ENCODE measurements at regions of chr17 and their contacts with region 1.

Region 1: DNA sequence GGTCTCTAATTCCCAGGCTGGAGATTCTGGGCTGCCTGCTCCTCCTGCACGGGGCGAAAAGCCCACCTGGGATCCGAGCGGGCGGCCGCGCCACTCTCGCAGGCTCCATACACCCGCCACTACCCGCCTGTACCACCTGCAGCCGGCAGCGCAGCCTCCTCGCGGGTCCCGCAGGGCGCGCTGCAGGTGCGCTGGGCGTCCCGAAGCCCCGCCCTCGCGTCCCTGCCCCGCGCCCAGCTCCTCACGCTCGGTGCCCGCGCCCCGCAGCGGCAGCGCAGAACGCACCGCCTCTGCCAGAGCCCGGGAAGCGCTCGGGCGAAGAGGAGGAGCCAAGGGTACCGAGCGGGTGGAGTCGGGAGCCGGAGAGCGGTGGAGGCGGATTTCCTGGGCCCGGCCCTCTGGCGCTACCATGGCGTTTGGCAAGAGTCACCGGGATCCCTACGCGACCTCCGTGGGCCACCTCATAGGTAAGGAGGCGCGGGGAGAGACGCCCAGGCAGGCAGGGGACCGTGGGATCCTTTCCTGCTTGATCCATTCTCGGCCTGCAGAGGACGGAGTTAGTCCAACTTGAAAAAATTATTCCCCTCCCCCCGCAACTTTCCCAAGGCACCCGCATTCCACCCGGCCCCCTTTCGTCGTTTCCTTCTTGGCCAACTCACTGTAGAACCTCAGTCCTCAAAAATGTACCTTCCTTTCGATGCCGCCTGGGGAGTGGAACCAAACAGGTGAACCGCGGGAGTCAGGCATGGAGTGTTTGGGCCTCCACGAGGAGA is at the start of gene TOM1L1:
- DNase-seq: peak; percentile 74 to 83 (median 80)
- ATAC-seq: peak; percentile 92
- H3K4me3 ChIP-seq: peak within 1 kb of the TSS; percentile 69
- H3K27ac ChIP-seq: peak within 1 kb of the TSS; percentile 49; the same call in 2 of the 3 replicates
- H3K4me1 ChIP-seq: peaks cover 14 to 16% of the 10 kb centered on the region in 2 experiments; a peak in 4 of 5 replicates
- H3K27me3 ChIP-seq: no peaks in the 10 kb centered on the region
- CTCF ChIP-seq: peak in 2 of 3 experiments; percentile 26 to 57; a peak in 3 of 6 replicates
- EP300 ChIP-seq: no peak
- POLR2A ChIP-seq: peak; percentile 68
- RAD21 ChIP-seq: no peak
- polyA plus RNA-seq, gene TOM1L1: 31.0 to 39.4 TPM

Region 2: GRCh38 chr17:54518706-54519105 is 381.9 kb before region 1 on chr17:
- CTCF ChIA-PET with region 1: interaction called, 10 read pairs
- POLR2A ChIA-PET with region 1: no interaction called
- in situ Hi-C with region 1: no loop called
- intact Hi-C with region 1: no loop called
- DNase-seq: no peak
- ATAC-seq: no peak
- H3K4me3 ChIP-seq: no peak overlapping the region
- H3K27ac ChIP-seq: no peak overlapping the region
- H3K4me1 ChIP-seq: no peaks in the 10 kb centered on the region
- H3K27me3 ChIP-seq: no peaks in the 10 kb centered on the region
- CTCF ChIP-seq: no peak
- EP300 ChIP-seq: no peak
- POLR2A ChIP-seq: no peak
- RAD21 ChIP-seq: no peak

Region 3: GRCh38 chr17:54864636-54865356 is 35.8 kb before region 1 on chr17:
- CTCF ChIA-PET with region 1: no interaction called
- POLR2A ChIA-PET with region 1: interaction called, 4 read pairs
- in situ Hi-C with region 1: no loop called
- intact Hi-C with region 1: loop called (anchors 5 kb)
- DNase-seq: peak in 2 of 4 experiments; percentile 55 to 69
- ATAC-seq: peak; percentile 10; the same call in 2 of the 3 replicates
- H3K4me3 ChIP-seq: no peak overlapping the region
- H3K27ac ChIP-seq: peak overlapping the region; percentile 52
- H3K4me1 ChIP-seq: peaks cover 13 to 55% of the 10 kb centered on the region in 2 experiments
- H3K27me3 ChIP-seq: no peaks in the 10 kb centered on the region
- CTCF ChIP-seq: no peak
- EP300 ChIP-seq: no peak
- POLR2A ChIP-seq: no peak
- RAD21 ChIP-seq: 0 out of 4 replicates have a peak, but pooled peaks of 1 of the 2 experiments have one; percentile 5

Region 4: GRCh38 chr17:54968262-54968987 is 67.8 kb after region 1 on chr17 and contains the starts of genes COX11 and STXBP4:
- CTCF ChIA-PET with region 1: no interaction called
- POLR2A ChIA-PET with region 1: no interaction called
- in situ Hi-C with region 1: no loop called
- intact Hi-C with region 1: loop called (anchors 1 kb)
- DNase-seq: peak; percentile 89 to 98 (median 93)
- ATAC-seq: peak; percentile 95
- H3K4me3 ChIP-seq: peak within 1 kb of the TSS; percentile 79
- H3K27ac ChIP-seq: peak within 1 kb of the TSS; percentile 79
- H3K4me1 ChIP-seq: peaks cover 0 to 21% of the 10 kb centered on the region in 2 experiments
- H3K27me3 ChIP-seq: no peaks in the 10 kb centered on the region
- CTCF ChIP-seq: peak; percentile 40 to 57 (median 55); a peak in 5 of 6 replicates
- EP300 ChIP-seq: no peak
- POLR2A ChIP-seq: peak; percentile 91
- RAD21 ChIP-seq: peak in 1 of 2 experiments; percentile 26; a peak in 1 of 4 replicates
- polyA plus RNA-seq, gene COX11: 18.5 to 18.8 TPM
- polyA plus RNA-seq, gene STXBP4: 11.6 to 13.9 TPM

Measured in K562 (cell line).